OCI-LY7 (cell line): ENCODE measurements at regions of chr17 and their contacts with region 1.

Region 1: DNA sequence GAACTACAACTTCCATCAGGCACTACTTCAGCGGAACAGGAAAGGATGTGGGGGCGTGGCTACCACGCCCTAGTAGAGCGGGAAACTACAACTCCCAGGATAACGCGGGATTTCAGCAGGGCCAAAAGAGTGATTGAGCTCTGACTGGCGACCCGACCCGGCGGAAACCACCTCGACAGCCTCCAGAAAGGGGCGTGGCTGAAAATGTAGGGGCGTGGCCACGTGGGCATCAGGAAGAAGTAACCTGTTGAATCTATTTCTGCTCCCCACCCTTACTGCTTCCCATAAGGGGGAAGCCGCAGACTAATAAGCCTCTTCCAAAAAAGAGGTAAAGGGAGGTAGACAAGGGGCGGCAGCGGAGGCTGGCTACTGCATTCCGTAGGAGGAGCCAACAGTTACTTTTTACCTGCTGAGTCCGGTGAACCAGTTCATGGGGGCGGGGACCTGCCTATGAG is at the start of gene TMEM102:
- DNase-seq: peak; percentile 99
- H3K4me3 ChIP-seq: peak within 1 kb of the TSS; percentile 76
- H3K27ac ChIP-seq: peak within 1 kb of the TSS; percentile 77
- H3K4me1 ChIP-seq: peaks cover 32% of the 10 kb centered on the region
- CTCF ChIP-seq: no peak
- total RNA-seq, gene TMEM102: 13.4 and 15.6 TPM in 2 replicates

Region 2: GRCh38 chr17:7035591-7036368 is 399.5 kb before region 1 on chr17 and contains the start of gene SLC16A13:
- CTCF ChIA-PET with region 1: no interaction called
- POLR2A ChIA-PET with region 1: no interaction called
- intact Hi-C with region 1: loop called (anchors 5 kb)
- DNase-seq: peak; percentile 98
- H3K4me3 ChIP-seq: peak within 1 kb of the TSS; percentile 79
- H3K27ac ChIP-seq: peak within 1 kb of the TSS; percentile 61
- H3K4me1 ChIP-seq: peaks cover 19% of the 10 kb centered on the region
- CTCF ChIP-seq: no peak
- total RNA-seq, gene SLC16A13: 0.77 and 2.8 TPM in 2 replicates

Region 3: DNA sequence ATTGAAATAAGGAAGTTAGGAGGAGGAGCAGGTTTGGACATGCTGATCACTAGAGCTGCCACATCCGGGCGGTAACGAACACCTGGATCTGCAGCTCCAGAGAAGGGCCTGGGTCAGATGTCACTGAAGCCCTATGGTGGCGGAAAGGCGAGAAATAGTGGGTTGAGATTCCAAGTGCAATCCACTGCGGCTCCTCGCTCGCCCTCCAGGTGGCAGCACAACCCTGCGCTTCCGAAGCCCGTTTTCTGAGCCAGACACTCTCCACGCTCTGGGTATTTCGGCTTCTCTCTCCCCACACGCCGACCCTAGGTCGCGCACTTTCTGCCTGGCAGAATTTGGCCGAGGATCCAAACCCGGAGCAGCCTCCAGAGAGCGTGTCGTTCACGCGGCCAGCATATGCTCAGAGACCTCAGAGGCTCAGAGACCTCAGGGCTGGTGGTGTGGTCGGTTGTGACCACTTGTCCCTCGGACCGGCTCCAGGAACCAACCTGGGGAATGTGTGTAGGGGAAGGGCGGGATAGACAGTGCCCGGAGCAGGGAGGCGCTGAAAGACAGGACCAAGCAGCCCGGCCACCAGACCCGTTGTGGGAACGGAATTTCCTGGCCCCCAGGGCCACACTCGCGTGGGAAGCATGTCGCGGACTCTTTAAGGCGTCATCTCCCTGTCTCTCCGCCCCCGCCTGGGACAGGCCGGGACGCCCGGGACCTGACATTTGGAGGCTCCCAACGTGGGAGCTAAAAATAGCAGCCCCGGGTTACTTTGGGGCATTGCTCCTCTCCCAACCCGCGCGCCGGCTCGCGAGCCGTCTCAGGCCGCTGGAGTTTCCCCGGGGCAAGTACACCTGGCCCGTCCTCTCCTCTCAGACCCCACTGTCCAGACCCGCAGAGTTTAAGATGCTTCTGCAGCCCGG is 154.5 kb before region 1 on chr17:
- CTCF ChIA-PET with region 1: no interaction called
- POLR2A ChIA-PET with region 1: no interaction called
- intact Hi-C with region 1: loop called (anchors 1 kb)
- DNase-seq: peak; percentile 92
- H3K4me3 ChIP-seq: peak overlapping the region; percentile 59
- H3K27ac ChIP-seq: peak overlapping the region; percentile 57
- H3K4me1 ChIP-seq: peaks cover 32% of the 10 kb centered on the region
- CTCF ChIP-seq: peak; percentile 96

Region 4: DNA sequence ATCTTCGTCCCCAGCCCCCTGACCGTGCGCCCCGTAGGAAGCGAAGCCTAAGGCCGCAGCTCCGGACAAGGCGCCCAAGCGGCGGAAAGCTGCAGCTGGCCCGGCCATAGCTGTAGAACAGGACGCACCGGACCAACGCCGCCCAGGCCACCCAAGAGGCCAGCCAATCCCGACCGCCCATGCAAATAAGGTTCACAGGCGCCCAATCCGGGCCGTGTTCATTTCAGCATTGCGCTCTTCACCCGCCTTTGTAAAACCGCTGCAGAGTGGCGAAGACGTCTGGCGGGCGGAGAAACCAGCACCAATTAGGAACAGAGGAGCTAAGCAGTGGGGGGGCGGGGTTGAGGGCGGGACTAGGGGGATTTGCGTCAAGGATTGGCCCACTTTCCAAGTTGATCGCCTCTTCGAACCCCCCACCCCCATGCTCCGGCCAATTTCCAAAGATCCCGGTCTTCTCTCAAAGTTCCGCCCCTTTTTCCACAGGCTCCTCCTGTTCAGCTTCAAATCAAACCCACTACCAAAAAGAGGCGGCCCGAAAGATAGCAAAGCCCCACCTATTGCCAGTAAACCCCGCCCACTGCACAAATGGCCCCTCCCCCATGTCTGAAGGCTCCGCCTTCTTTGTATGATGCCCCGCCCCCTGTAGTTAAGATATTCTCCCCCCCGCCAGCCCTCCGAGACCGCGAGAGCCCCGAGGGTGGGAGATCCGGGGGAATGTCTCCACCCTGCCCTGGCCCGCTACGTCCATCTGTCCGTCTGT is 31.1 kb before region 1 on chr17 and contains the start of gene TMEM256:
- CTCF ChIA-PET with region 1: interaction called, 18 read pairs
- POLR2A ChIA-PET with region 1: interaction called, 8 read pairs
- intact Hi-C with region 1: no loop called
- DNase-seq: peak; percentile 98
- H3K4me3 ChIP-seq: peak within 1 kb of the TSS; percentile 70
- H3K27ac ChIP-seq: no peak within 1 kb of the TSS
- H3K4me1 ChIP-seq: peaks cover 6% of the 10 kb centered on the region
- CTCF ChIP-seq: no peak
- total RNA-seq, gene TMEM256: 108 and 165 TPM in 2 replicates

Region 5: GRCh38 chr17:7484067-7484918 is 49.0 kb after region 1 on chr17 and contains the start of gene POLR2A:
- CTCF ChIA-PET with region 1: interaction called, 3 read pairs
- POLR2A ChIA-PET with region 1: no interaction called
- intact Hi-C with region 1: loop called (anchors 1 kb)
- DNase-seq: peak; percentile 98
- H3K4me3 ChIP-seq: peak within 1 kb of the TSS; percentile 89
- H3K27ac ChIP-seq: peak within 1 kb of the TSS; percentile 90
- H3K4me1 ChIP-seq: peaks cover 38% of the 10 kb centered on the region
- CTCF ChIP-seq: no peak
- total RNA-seq, gene POLR2A: 76.6 and 84.2 TPM in 2 replicates

Region 6: GRCh38 chr17:7561028-7561575 is 125.9 kb after region 1 on chr17:
- CTCF ChIA-PET with region 1: interaction called, 3 read pairs
- POLR2A ChIA-PET with region 1: interaction called, 3 read pairs
- intact Hi-C with region 1: loop called (anchors 1 kb)
- DNase-seq: peak; percentile 88
- H3K4me3 ChIP-seq: peak overlapping the region; percentile 94
- H3K27ac ChIP-seq: peak overlapping the region; percentile 80
- H3K4me1 ChIP-seq: peaks cover 47% of the 10 kb centered on the region
- CTCF ChIP-seq: peak; percentile 74